Psoas muscle (tissue), 8 donors: ENCODE measurements at regions of chrX and their contacts with region 1.

Region 1: GRCh38 chrX:31199056-31199769 is 127.4 kb upstream of the FTHL17 start:
- DNase-seq: no peak
- ATAC-seq: no peak
- H3K4me3 ChIP-seq: no peak overlapping the region
- H3K27ac ChIP-seq: no peak overlapping the region
- H3K4me1 ChIP-seq: no peaks in the 10 kb centered on the region
- H3K27me3 ChIP-seq: no peaks in the 10 kb centered on the region
- CTCF ChIP-seq: no peak

Region 2: GRCh38 chrX:30659421-30659820 is 539.8 kb before region 1 on chrX:
- intact Hi-C with region 1: no loop called
- DNase-seq: no peak
- ATAC-seq: no peak
- H3K4me3 ChIP-seq: no peak overlapping the region
- H3K27ac ChIP-seq: no peak overlapping the region
- H3K4me1 ChIP-seq: no peaks in the 10 kb centered on the region
- H3K27me3 ChIP-seq: no peaks in the 10 kb centered on the region
- CTCF ChIP-seq: no peak

Region 3: GRCh38 chrX:31136144-31136611 is 63.0 kb before region 1 on chrX:
- intact Hi-C with region 1: loop called in 1 of 2 experiments (anchors 10 kb)
- DNase-seq: no peak
- ATAC-seq: no peak
- H3K4me3 ChIP-seq: no peak overlapping the region
- H3K27ac ChIP-seq: no peak overlapping the region
- H3K4me1 ChIP-seq: no peaks in the 10 kb centered on the region
- H3K27me3 ChIP-seq: no peaks in the 10 kb centered on the region
- CTCF ChIP-seq: no peak